Mammary epithelial cell (primary cell): ENCODE measurements at regions of chr10 and their contacts with region 1.

Region 1: DNA sequence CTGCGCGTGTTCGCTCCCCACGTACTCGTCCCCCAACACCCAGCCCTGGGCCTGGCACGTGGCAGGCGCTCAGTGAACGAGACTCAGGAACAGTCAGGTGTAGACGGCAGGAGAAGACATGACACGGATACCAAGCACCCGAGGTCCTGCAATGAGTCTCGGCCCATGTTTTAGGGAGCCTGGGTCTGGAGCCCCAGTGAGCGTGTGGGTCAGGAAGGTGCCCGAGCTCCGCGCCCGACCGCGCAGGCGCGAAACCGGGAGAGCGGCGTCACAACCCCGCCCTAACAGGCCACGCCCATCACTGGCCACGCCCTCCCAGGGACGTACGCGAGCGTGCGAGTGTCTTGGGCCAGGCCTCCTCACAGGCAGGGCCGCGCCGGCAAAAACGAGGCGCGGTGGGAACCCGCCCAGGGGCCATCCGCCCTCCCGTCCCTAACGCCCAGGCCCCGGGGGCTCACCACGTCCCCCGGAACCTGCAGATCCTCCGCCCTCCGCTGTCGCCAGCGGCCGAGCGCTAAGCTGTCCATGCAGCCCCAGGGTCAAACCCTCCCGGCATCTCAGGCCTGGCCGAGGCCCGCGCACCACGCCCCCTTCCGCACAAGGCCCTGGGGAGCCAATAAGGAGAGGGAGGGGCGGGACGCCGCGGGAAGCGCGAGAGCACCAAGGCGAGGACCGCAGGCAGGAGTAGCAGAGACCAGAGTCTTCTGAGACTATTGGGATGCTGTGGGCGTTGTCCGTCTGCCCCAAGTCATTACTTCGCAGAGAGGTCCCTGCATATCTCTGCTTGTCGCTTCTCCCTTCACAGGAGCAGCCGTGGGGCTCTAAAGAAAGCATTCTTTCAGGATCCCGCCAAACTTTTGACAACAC is at the start of gene C10orf143:
- DNase-seq: peak; percentile 97
- H3K4me3 ChIP-seq: peak within 1 kb of the TSS; percentile 74 to 93 (median 84)
- H3K27ac ChIP-seq: peak within 1 kb of the TSS; percentile 94
- H3K4me1 ChIP-seq: peaks cover 11% of the 10 kb centered on the region
- H3K27me3 ChIP-seq: no peaks in the 10 kb centered on the region
- CTCF ChIP-seq: no peak
- total RNA-seq, gene C10orf143: 1.3 to 2.4 TPM

Region 2: DNA sequence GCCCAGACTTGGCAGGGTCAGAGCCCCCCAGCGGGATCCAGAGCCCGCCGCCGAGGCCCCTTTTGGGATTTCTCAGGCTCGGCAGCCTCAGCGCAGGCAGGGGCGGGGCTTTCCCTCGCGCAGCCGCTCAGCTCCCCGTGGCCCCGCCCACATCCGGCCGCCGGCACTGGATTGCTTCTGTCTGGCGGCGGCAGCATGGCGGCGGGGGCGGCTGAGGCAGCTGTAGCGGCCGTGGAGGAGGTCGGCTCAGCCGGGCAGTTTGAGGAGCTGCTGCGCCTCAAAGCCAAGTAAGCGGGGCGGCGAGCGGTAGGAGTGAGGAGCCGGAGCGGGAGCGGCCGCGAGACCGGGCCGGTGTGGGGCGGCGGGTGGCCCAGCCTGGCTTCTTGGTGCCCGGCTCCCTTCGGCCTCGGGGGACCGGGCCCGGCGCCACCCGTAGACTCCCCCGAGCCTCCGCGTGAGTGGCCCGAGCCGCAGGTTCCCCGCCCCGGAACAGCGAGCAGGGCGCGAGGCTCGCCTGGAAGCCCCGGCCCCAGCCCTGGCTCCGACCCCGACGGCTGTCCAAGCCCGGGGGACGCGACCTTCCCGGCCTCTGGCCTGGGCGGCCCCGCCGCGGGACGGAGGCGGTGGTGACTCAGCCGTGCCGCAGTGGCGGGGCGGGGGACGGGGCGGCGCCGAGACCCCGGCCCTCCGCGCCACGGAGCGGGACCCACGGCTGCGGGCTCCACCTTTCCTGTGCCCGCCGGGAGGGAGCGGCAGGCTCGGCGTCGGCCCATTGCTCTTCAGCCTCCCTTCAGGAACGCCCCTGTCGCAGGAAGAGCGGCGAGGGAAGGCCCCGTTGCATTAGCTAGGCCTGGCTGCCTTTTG is 26.0 kb after region 1 on chr10 and contains the start of gene GLRX3:
- CTCF ChIA-PET with region 1: no interaction called
- dilution Hi-C with region 1: no loop called
- in situ Hi-C with region 1: no loop called
- intact Hi-C with region 1: loop called (anchors 1 kb)
- DNase-seq: peak; percentile 81
- H3K4me3 ChIP-seq: peak within 1 kb of the TSS; percentile 60 to 80 (median 76)
- H3K27ac ChIP-seq: peak within 1 kb of the TSS; percentile 88
- H3K4me1 ChIP-seq: peaks cover 28% of the 10 kb centered on the region
- H3K27me3 ChIP-seq: no peaks in the 10 kb centered on the region
- CTCF ChIP-seq: no peak
- total RNA-seq, gene GLRX3: 77.8 to 151 TPM